ENCODE measurements at regions of chr1 and their contacts with region 1.

Region 1: GRCh38 chr1:118716782-118717181 is 271.4 kb downstream of the TBX15 start:
- DNase-seq: no peak
- ATAC-seq: peak in 2 of 4 donors; percentile 40 to 62
- H3K4me3 ChIP-seq: no peak overlapping the region
- H3K27ac ChIP-seq: no peak overlapping the region
- H3K4me1 ChIP-seq: no peaks in the 10 kb centered on the region
- H3K27me3 ChIP-seq: no peaks in the 10 kb centered on the region
- CTCF ChIP-seq: peak; percentile 43

Region 2: DNA sequence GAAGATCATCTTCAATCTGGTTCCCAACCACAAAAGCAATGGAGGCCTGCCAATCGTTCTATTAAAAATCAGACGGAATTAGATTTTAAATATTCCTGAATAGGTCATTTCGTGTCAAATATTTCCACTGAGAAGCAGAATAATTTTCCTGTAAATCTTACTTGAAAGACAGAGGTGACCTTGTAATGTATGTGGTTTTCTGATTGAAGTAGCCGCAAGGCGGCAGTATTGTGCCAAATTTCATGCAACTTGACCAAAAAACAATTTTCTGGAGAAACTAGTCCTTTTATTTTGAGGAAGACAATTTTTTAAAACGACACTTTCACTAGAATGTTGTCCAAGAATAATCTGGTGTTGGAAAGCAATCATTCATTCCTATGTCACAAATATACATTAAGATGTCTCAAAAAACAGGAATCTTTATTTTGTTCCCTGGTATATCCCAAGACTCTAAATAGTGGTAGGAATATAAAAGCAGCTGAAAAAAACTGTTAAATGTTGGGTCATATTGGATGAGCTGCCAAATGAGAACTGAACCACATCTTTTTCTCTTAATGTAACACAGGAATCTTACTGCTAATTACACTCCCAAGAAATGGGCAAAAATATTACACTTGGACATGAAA is 565.4 kb before region 1 on chr1:
- intact Hi-C with region 1: loop called in 1 of 2 experiments (anchors 5 kb)
- DNase-seq: peak in 1 of 2 donors; percentile 57
- ATAC-seq: peak in 1 of 4 donors; percentile 56
- H3K4me3 ChIP-seq: no peak overlapping the region
- H3K27ac ChIP-seq: no peak overlapping the region
- H3K4me1 ChIP-seq: no peaks in the 10 kb centered on the region
- H3K27me3 ChIP-seq: no peaks in the 10 kb centered on the region
- CTCF ChIP-seq: peak; percentile 76

Region 3: GRCh38 chr1:118304722-118305359 is 411.9 kb before region 1 on chr1:
- intact Hi-C with region 1: loop called in 1 of 2 experiments (anchors 10 kb)
- DNase-seq: no peak
- ATAC-seq: peak; percentile 22 to 58 (median 52)
- H3K4me3 ChIP-seq: no peak overlapping the region
- H3K27ac ChIP-seq: peak overlapping the region; percentile 88
- H3K4me1 ChIP-seq: peaks cover 44% of the 10 kb centered on the region
- H3K27me3 ChIP-seq: no peaks in the 10 kb centered on the region
- CTCF ChIP-seq: peak; percentile 58